ENCODE measurements at regions of chr1 and their contacts with region 1.

Region 1: DNA sequence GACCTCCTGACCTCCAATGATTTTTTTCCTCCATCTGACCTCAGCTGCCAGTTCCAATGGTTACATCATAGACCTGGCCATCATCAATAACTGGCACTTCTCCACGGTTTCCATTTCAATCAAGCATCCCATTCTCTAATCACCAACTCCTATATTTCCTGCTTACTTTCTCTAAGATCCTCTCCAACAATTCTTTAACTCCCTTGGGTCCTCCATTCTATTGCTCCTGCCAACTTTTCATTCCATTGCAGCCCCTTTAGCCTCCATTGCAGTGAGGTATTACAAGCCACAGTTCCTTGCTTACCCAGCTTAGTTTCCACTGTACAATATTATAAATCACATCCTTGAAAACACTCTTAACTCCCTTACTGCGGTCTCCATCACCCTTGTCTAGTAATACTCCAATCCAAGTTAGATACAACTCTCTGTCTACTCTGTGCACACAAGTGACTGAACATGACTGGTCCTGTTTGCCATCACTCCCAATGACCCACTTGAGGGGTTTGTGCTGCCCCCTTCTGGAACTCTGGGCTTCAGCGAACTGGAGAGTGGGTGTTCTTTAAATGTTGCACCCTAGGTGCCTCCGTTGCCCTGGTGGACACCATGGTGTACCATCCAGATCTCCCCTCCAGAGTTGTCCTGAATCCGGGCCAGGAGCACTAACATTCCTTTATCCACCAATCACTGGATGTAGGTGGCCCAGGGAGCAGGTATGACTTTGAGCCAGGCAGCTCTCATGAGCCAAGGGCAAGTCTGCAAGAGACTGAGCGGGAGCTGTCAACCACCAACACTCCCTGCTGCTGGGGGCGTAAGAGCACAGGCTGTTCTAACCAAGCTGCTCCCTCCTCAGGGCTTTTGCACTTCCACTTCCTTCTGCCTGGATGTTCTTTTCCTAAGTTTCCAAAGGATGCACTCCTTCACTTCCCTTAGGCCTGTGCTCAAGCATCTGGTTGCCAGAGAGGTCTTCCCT is 3.7 kb upstream of the FNDC7 start:
- DNase-seq: peak; percentile 70
- H3K4me3 Mint-ChIP-seq: no peak overlapping the region
- H3K27ac Mint-ChIP-seq: no peak overlapping the region
- H3K4me1 Mint-ChIP-seq: peaks cover 33% of the 10 kb centered on the region
- H3K27me3 Mint-ChIP-seq: no peaks in the 10 kb centered on the region

Region 2: GRCh38 chr1:108533351-108534083 is 175.5 kb before region 1 on chr1:
- CTCF ChIA-PET with region 1: no interaction called
- POLR2A ChIA-PET with region 1: no interaction called
- DNase-seq: no peak
- H3K4me3 Mint-ChIP-seq: no peak overlapping the region
- H3K27ac Mint-ChIP-seq: no peak overlapping the region
- H3K4me1 Mint-ChIP-seq: peaks cover 5% of the 10 kb centered on the region
- H3K27me3 Mint-ChIP-seq: peaks cover 21% of the 10 kb centered on the region

Region 3: GRCh38 chr1:108661030-108661620 is 47.9 kb before region 1 on chr1 and contains the start of gene HENMT1:
- CTCF ChIA-PET with region 1: interaction called, 5 read pairs
- POLR2A ChIA-PET with region 1: interaction called, 19 read pairs
- DNase-seq: peak; percentile 82
- H3K4me3 Mint-ChIP-seq: peak within 1 kb of the TSS; percentile 78
- H3K27ac Mint-ChIP-seq: peak within 1 kb of the TSS; percentile 90
- H3K4me1 Mint-ChIP-seq: peaks cover 45% of the 10 kb centered on the region
- H3K27me3 Mint-ChIP-seq: no peaks in the 10 kb centered on the region
- total RNA-seq, gene HENMT1: 26.7 to 27.3 TPM

Region 4: DNA sequence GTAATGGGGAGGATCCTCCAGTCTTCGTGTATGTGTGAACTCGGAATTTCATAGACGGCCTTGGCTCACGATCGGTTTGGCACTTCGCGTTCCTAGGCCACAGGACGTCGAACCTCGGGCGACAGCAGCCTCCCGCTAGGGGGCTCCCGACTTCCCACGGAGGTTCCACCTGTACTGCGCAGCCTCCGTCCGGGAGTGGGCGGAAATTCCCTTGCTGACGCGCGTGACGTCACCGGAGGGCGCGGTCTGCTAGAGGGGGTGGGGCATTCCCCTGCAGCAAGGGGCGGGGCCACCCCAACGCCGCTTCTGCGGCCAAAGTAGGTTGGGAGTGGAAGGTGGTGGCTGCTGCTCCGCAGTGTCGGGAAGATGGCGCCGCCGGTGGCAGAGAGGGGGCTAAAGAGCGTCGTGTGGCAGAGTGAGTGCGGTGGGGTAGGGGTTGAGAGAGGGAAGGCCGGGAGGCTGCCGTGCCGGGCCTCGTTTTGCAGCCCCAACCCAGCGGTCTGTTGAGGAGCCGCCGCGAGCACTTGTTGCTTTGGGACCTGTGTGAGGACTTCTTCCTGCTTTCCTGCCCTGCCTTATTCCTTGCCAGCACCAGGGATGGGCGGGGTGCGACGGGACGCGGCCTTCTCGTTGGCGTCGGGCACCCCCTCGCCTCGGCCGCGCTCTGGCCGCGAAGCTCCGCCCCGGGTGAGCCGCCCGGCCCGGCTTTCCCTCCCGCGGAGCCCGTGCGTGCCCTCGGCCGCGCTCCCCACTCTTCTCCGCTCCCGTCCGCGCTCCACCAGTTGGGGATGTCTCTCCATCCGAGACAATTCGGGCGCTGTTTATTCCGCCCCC is 37.6 kb after region 1 on chr1 and contains the start of gene STXBP3:
- CTCF ChIA-PET with region 1: no interaction called
- POLR2A ChIA-PET with region 1: interaction called, 10 read pairs
- DNase-seq: peak; percentile 100
- H3K4me3 Mint-ChIP-seq: peak within 1 kb of the TSS; percentile 93
- H3K27ac Mint-ChIP-seq: peak within 1 kb of the TSS; percentile 95
- H3K4me1 Mint-ChIP-seq: peaks cover 31% of the 10 kb centered on the region
- H3K27me3 Mint-ChIP-seq: no peaks in the 10 kb centered on the region
- total RNA-seq, gene STXBP3: 55.9 to 60.8 TPM